Activated CD4-positive, alpha-beta memory T cell treated with anti-CD3 and anti-CD28 coated beads for 36 hours (primary cell): ENCODE measurements at regions of chr4 and their contacts with region 1.

Region 1: GRCh38 chr4:23333946-23334878 is 555.6 kb downstream of the PPARGC1A start:
- DNase-seq: peak; percentile 34
- H3K4me3 Mint-ChIP-seq: peak overlapping the region; percentile 26
- H3K27ac Mint-ChIP-seq: peak overlapping the region; percentile 87
- H3K4me1 Mint-ChIP-seq: peaks cover 31% of the 10 kb centered on the region
- H3K27me3 Mint-ChIP-seq: no peaks in the 10 kb centered on the region

Region 2: DNA sequence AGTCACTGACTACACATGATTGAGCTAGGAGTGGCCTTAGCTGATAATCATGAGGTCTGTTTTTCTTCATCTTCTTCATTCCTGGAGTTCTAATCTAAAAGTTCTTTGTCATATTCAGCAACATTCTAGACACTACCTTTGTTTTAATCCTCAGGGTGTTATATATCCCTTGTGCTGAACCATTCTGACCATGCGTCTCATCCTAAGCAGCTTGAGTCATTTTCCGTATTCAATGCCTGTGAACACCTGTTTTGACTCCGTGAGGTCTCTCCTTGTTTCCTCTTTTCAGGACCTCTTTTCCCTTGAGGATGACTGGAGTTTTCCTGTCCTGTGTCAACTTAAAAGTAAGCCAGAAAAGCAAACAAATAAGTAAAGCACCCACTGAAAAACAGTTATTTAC is 43.6 kb before region 1 on chr4:
- CTCF ChIA-PET with region 1: no interaction called
- POLR2A ChIA-PET with region 1: no interaction called
- intact Hi-C with region 1: loop called (anchors 1 kb)
- DNase-seq: no peak
- H3K4me3 Mint-ChIP-seq: no peak overlapping the region
- H3K27ac Mint-ChIP-seq: no peak overlapping the region
- H3K4me1 Mint-ChIP-seq: peaks cover 9% of the 10 kb centered on the region
- H3K27me3 Mint-ChIP-seq: no peaks in the 10 kb centered on the region

Region 3: DNA sequence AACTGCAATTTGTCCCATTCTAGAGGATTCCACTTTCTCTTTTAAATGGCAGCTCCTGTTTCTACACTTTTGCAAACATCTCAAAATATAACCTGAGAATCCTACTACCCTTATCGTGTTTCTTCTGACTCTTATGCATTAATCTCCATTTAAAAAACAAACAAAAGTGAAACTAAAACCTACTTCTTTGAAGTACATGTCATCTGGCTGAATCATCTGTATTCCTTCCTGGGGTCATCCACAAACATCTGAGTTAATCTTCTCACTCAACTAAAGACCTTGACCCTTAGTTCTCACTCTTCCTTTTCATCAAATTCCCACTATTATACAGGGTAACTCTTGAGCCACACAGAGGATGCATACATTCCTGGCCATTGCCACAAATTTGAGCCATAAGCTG is 29.2 kb before region 1 on chr4:
- CTCF ChIA-PET with region 1: no interaction called
- POLR2A ChIA-PET with region 1: no interaction called
- intact Hi-C with region 1: loop called (anchors 1 kb)
- DNase-seq: no peak
- H3K4me3 Mint-ChIP-seq: no peak overlapping the region
- H3K27ac Mint-ChIP-seq: no peak overlapping the region
- H3K4me1 Mint-ChIP-seq: peaks cover 6% of the 10 kb centered on the region
- H3K27me3 Mint-ChIP-seq: no peaks in the 10 kb centered on the region

Region 4: DNA sequence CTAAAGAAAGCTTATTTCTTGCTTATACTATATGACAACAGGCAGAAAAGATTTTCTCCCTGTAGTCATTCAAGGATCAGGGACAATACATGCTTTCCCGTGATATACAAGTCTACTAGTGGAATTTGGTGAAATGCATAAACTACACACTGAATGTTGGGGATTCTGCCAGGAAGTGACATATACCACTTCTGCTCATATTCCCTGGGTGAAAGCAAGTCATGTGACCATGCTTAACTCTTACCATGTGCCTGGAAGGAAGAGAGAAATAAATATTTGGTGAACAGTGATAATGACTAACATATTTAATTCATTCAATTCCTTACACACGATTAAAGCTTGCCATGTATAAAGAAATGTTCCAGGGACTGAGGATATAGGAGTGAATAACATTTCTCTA is 21.0 kb after region 1 on chr4:
- CTCF ChIA-PET with region 1: no interaction called
- POLR2A ChIA-PET with region 1: no interaction called
- intact Hi-C with region 1: no loop called
- DNase-seq: no peak
- H3K4me3 Mint-ChIP-seq: no peak overlapping the region
- H3K27ac Mint-ChIP-seq: no peak overlapping the region
- H3K4me1 Mint-ChIP-seq: no peaks in the 10 kb centered on the region
- H3K27me3 Mint-ChIP-seq: no peaks in the 10 kb centered on the region

Region 5: DNA sequence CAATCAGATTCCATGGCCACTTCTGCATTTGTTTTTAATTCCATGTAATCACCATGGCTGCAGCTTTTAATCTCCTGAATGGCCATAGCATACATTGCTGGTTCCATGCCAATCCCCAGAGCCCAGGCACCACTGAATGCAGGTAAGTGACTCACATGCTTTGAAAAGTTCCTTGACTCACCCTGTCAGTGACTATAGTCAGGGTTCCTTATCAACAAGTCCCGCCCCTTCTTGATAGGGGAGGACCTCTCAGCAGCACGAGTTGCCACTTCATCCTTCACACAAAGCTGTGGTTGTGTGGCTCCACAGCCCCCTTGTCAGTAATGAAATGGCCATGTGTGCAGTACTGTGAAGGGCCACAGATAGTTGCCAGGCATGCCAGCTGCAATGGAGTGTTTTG is 39.0 kb after region 1 on chr4:
- CTCF ChIA-PET with region 1: no interaction called
- POLR2A ChIA-PET with region 1: no interaction called
- intact Hi-C with region 1: loop called (anchors 1 kb)
- DNase-seq: peak; percentile 42
- H3K4me3 Mint-ChIP-seq: no peak overlapping the region
- H3K27ac Mint-ChIP-seq: no peak overlapping the region
- H3K4me1 Mint-ChIP-seq: no peaks in the 10 kb centered on the region
- H3K27me3 Mint-ChIP-seq: no peaks in the 10 kb centered on the region

Region 6: DNA sequence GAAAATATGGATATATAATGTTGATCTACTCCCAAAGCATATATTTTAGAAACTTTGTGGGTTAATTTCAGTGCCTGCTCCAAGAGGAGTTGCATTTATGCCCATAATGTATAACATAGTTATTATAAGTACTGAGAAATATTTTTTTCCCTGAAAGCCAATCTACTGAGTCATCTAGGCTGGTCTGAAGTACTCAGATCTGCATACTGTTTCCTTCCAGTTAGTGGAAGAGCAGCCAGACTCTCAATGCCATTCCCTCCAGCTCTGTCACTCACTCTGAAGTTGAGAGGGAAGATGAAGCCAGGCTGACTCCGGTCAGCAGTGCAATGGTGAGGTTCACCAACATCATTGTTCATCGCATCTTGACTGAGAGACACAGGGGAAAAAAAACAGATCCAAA is 50.5 kb after region 1 on chr4:
- CTCF ChIA-PET with region 1: no interaction called
- POLR2A ChIA-PET with region 1: no interaction called
- intact Hi-C with region 1: no loop called
- DNase-seq: no peak
- H3K4me3 Mint-ChIP-seq: no peak overlapping the region
- H3K27ac Mint-ChIP-seq: no peak overlapping the region
- H3K4me1 Mint-ChIP-seq: no peaks in the 10 kb centered on the region
- H3K27me3 Mint-ChIP-seq: no peaks in the 10 kb centered on the region

Region 7: GRCh38 chr4:24419181-24420034 is 1085.2 kb after region 1 on chr4:
- CTCF ChIA-PET with region 1: no interaction called
- POLR2A ChIA-PET with region 1: no interaction called
- intact Hi-C with region 1: loop called (anchors 1 kb)
- DNase-seq: peak; percentile 76
- H3K4me3 Mint-ChIP-seq: no peak overlapping the region
- H3K27ac Mint-ChIP-seq: no peak overlapping the region
- H3K4me1 Mint-ChIP-seq: peaks cover 3% of the 10 kb centered on the region
- H3K27me3 Mint-ChIP-seq: peaks cover 3% of the 10 kb centered on the region